Psoas muscle (tissue), 8 donors: ENCODE measurements at regions of chr10 and their contacts with region 1.

Region 1: GRCh38 chr10:73803680-73804286 is 7.6 kb downstream of the NDST2 start:
- DNase-seq: peak in 1 of 2 donors; percentile 3
- ATAC-seq: no peak
- H3K4me3 ChIP-seq: no peak overlapping the region
- H3K27ac ChIP-seq: no peak overlapping the region
- H3K4me1 ChIP-seq: no peaks in the 10 kb centered on the region
- H3K27me3 ChIP-seq: no peaks in the 10 kb centered on the region
- CTCF ChIP-seq: no peak

Region 2: GRCh38 chr10:73791871-73792400 is 11.8 kb before region 1 on chr10:
- intact Hi-C with region 1: loop called (anchors 2 kb)
- DNase-seq: no peak
- ATAC-seq: no peak
- H3K4me3 ChIP-seq: no peak overlapping the region
- H3K27ac ChIP-seq: no peak overlapping the region
- H3K4me1 ChIP-seq: peaks cover 21% of the 10 kb centered on the region
- H3K27me3 ChIP-seq: no peaks in the 10 kb centered on the region
- CTCF ChIP-seq: no peak